Lower leg skin (tissue), 4 donors: ENCODE measurements at regions of chr22 and their contacts with region 1.

Region 1: DNA sequence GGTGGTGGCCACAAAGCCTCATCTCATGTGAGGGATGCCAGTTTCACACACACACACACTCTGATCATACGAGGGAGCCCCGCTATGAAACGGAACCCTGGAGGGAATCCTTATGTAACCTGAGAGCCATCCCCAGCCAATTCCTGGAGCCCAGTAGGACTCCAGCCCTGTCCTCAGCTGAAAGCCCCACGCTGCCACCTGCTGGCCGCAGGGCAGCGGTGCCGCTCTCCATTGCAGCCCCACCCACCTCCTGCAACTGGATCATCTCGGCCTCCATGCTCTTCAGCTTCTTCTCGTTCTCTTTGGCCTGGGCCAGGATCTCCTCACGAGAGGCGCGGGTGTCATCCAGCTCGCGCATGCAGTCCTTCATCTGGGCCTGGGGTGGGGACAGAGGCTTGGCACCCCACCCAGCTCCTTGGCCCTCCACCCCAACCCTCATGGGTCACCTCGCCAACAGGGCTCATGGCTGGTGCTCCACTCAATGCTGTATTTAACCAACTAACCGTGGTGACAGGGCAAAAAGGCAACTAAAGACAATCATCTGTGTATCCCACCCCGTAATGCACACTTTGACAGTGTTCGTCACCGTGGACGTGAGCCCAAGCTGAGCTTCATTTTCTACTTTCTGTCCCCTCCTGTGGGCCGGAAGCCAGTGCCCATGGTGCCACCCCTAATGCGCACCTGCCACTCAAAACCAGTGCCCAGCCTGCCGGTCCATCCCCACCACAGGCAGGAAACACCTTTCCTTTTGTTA is 33.7 kb downstream of the APOL1 start:
- DNase-seq: peak; percentile 71 to 96
- H3K4me3 ChIP-seq: no peak overlapping the region
- CTCF ChIP-seq: peak in 1 of 3 donors; percentile 84
- POLR2A ChIP-seq: no peak

Region 2: DNA sequence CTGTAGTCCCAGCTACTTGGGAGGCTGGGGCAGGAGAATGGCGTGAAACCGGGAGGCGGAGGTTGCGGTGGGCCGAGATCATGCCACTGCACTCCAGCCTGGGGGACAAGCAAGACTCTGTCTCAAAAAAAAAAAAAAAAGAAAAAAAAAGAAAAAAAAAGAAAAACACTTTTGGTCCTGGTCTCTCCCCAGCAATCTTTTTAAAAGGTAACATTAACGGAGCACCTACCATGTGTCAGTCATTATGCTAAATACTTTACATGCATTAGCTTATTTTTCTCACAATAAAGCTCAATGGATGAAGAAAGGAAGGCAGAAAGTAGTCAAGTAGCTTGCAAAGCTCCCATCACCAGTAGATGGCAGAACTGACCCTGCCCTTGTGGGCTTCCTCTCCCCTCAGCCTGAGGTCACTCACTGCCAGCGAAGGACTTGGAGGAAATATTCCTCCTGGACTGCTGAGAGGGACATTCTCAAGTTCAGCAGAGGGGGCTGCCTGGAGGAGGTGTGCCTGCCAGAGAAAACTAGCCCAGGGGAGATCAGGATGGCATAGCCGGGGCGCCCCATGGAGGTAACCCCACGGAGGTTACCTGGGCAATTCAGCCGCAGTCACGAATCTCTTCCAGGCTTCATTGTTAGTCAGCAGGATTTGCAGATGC is 141.6 kb before region 1 on chr22:
- intact Hi-C with region 1: loop called (anchors 10 kb)
- DNase-seq: no peak
- H3K4me3 ChIP-seq: no peak overlapping the region
- CTCF ChIP-seq: peak in 1 of 3 donors; percentile 40
- POLR2A ChIP-seq: no peak

Region 3: DNA sequence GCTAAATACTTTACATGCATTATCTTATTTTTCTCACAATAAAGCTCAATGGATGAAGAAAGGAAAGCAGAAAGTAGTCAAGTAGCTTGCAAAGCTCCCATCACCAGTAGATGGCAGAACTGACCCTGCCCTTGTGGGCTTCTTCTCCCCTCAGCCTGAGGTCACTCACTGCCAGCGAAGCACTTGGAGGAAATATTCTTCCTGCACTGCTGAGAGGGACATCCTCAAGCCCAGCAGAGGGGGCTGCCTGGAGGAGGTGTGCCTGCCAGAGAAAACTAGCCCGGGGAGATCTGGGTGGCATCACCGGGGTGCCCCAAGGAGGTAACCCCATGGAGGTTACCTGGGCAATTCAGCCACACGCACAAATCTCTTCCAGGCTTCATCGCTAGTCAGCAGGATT is 91.7 kb before region 1 on chr22:
- intact Hi-C with region 1: loop called (anchors 10 kb)
- DNase-seq: peak in 1 of 2 donors; percentile 86
- H3K4me3 ChIP-seq: no peak overlapping the region
- CTCF ChIP-seq: no peak
- POLR2A ChIP-seq: no peak

Region 4: GRCh38 chr22:36221799-36222751 is 64.6 kb before region 1 on chr22:
- intact Hi-C with region 1: no loop called
- DNase-seq: peak in 1 of 2 donors; percentile 88
- H3K4me3 ChIP-seq: no peak overlapping the region
- CTCF ChIP-seq: no peak
- POLR2A ChIP-seq: no peak